Activated CD8-positive, alpha-beta T cell treated with anti-CD3 and anti-CD28 coated beads, Interleukin-2, amount 10 ng/mL, durations not matched to agents 7 days and 5 days (primary cell): ENCODE measurements at regions of chr6 and their contacts with region 1.

Region 1: GRCh38 chr6:30828027-30828960 is 56.0 kb upstream of the DDR1 start:
- DNase-seq: peak; percentile 88
- ATAC-seq: peak; percentile 82
- H3K4me3 Mint-ChIP-seq: peak overlapping the region; percentile 82
- H3K27ac Mint-ChIP-seq: peak overlapping the region; percentile 91
- H3K4me1 Mint-ChIP-seq: peaks cover 69% of the 10 kb centered on the region
- H3K27me3 Mint-ChIP-seq: no peaks in the 10 kb centered on the region

Region 2: GRCh38 chr6:30730601-30731435 is 97.5 kb before region 1 on chr6:
- CTCF ChIA-PET with region 1: interaction called, 12 read pairs
- POLR2A ChIA-PET with region 1: interaction called, 7 read pairs
- DNase-seq: peak; percentile 92
- ATAC-seq: peak; percentile 95
- H3K4me3 Mint-ChIP-seq: peak overlapping the region; percentile 44
- H3K27ac Mint-ChIP-seq: peak overlapping the region; percentile 70
- H3K4me1 Mint-ChIP-seq: peaks cover 61% of the 10 kb centered on the region
- H3K27me3 Mint-ChIP-seq: no peaks in the 10 kb centered on the region

Region 3: DNA sequence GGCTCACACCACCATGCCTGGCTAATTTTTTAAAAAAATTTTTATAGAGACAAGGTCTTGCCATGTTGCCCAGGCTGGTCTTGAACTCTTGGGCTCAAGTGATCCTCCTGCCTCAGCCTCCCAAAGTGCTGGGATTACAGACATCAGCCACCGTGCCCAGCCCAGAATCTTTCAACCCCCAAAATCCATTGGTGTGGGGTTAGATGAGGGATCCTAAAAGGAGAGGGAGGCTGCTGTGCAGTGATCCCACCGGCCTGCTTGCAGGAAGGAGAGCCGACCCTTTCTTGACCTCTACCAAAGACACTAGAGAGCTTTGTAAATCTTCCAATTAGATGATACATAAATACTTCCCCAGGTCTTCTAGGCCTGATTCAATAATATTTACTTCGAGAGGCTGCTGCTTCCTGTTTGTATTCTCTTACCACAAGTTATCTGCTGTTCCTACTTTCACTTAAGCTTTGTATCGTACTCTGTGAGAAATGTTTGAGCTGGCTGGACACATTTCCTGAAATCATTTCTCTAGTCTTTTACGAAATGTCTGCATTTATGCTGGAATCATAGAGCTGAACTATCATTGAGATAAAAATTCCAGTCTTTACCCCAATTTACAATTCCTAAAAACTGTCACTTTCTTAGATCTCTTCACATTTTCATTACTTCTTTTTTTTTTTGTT is 34.6 kb before region 1 on chr6:
- CTCF ChIA-PET with region 1: interaction called, 16 read pairs
- POLR2A ChIA-PET with region 1: no interaction called
- DNase-seq: peak; percentile 42
- ATAC-seq: peak; percentile 80
- H3K4me3 Mint-ChIP-seq: peak overlapping the region; percentile 67
- H3K27ac Mint-ChIP-seq: peak overlapping the region; percentile 93
- H3K4me1 Mint-ChIP-seq: peaks cover 66% of the 10 kb centered on the region
- H3K27me3 Mint-ChIP-seq: no peaks in the 10 kb centered on the region

Region 4: GRCh38 chr6:30844091-30844535 is 15.8 kb after region 1 on chr6:
- CTCF ChIA-PET with region 1: interaction called, 77 read pairs
- POLR2A ChIA-PET with region 1: interaction called, 3 read pairs
- DNase-seq: no peak
- ATAC-seq: no peak
- H3K4me3 Mint-ChIP-seq: no peak overlapping the region
- H3K27ac Mint-ChIP-seq: peak overlapping the region; percentile 62
- H3K4me1 Mint-ChIP-seq: peaks cover 51% of the 10 kb centered on the region
- H3K27me3 Mint-ChIP-seq: no peaks in the 10 kb centered on the region

Region 5: GRCh38 chr6:30883685-30884520 is 55.6 kb after region 1 on chr6 and contains the start of gene DDR1:
- CTCF ChIA-PET with region 1: interaction called, 116 read pairs
- POLR2A ChIA-PET with region 1: interaction called, 15 read pairs
- DNase-seq: peak; percentile 57
- ATAC-seq: peak; percentile 85
- H3K4me3 Mint-ChIP-seq: peak within 1 kb of the TSS; percentile 73
- H3K27ac Mint-ChIP-seq: peak within 1 kb of the TSS; percentile 21
- H3K4me1 Mint-ChIP-seq: peaks cover 31% of the 10 kb centered on the region
- H3K27me3 Mint-ChIP-seq: peaks cover 10% of the 10 kb centered on the region
- total RNA-seq, gene DDR1: 6.3 to 7.4 TPM

Region 6: DNA sequence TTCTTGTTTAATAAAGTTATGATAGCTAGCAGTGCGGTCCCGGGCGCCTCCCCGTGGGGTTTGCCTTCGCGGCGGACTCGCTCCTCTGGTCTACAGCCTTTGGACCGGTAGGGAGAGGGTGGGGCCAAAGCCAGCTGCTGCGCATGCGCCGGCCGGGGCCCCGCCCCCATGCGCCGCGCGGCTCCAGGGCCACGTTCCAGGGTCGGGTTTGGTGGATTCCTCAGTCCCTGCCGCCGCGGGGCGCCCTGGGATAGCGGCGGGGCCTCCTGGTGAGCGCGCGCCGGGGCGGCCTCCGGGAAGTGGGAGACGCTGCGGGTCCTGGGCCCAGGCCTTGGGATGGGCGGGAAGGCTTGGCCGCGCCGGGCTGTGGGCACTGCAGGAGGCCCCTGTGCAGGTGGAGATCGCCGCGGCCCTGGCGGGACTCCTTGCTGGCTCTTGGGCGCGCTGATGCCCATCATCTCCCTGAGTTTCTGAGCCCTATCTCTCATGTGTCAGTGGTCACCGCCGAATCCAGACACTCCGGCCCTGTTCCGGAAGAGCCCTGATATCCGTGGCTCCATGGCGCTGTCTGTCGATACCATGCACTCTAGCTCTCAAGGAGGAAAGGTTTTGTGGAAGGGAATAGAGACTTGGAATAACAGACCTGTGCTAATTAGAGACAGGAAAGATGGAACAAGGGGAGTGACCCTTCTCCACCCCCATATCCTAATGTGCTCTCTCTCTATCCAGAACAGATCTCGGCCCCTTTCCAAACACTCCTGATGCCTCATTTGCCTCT is 86.0 kb after region 1 on chr6 and contains the start of gene VARS2:
- CTCF ChIA-PET with region 1: interaction called, 69 read pairs
- POLR2A ChIA-PET with region 1: no interaction called
- DNase-seq: peak; percentile 87
- ATAC-seq: peak; percentile 97
- H3K4me3 Mint-ChIP-seq: peak within 1 kb of the TSS; percentile 86
- H3K27ac Mint-ChIP-seq: peak within 1 kb of the TSS; percentile 89
- H3K4me1 Mint-ChIP-seq: peaks cover 29% of the 10 kb centered on the region
- H3K27me3 Mint-ChIP-seq: no peaks in the 10 kb centered on the region
- total RNA-seq, gene VARS2: 38.4 to 38.8 TPM

Region 7: GRCh38 chr6:31087494-31088089 is 259.3 kb after region 1 on chr6:
- CTCF ChIA-PET with region 1: interaction called, 41 read pairs
- POLR2A ChIA-PET with region 1: no interaction called
- DNase-seq: peak; percentile 91
- ATAC-seq: peak; percentile 90
- H3K4me3 Mint-ChIP-seq: no peak overlapping the region
- H3K27ac Mint-ChIP-seq: no peak overlapping the region
- H3K4me1 Mint-ChIP-seq: peaks cover 9% of the 10 kb centered on the region
- H3K27me3 Mint-ChIP-seq: peaks cover 14% of the 10 kb centered on the region